ENCODE measurements at regions of chr9 and their contacts with region 1.

Region 1: DNA sequence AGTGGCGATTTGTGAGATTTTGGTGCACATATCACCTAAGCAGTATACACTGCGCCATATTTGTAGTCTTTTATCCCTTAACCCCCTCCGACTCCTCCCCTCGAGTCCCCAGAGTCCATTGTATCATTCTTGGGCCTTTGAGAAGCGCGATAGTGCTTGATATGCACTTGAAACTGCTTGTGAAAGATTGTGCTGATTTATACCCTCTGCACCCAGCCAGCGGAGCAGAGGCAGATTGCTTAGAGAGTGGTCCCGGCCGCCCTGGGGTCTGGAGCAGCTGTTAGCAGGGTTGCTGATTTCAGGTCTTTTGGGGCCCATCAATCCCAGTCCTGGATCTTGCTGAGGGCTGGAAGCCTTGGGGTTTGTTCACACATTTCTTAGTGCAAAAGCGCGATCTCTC is 13.0 kb upstream of the FAM240B start:
- DNase-seq: no peak
- ATAC-seq: no peak
- H3K4me3 Mint-ChIP-seq: no peak overlapping the region
- H3K27ac Mint-ChIP-seq: no peak overlapping the region
- H3K4me1 Mint-ChIP-seq: no peaks in the 10 kb centered on the region
- H3K27me3 Mint-ChIP-seq: peaks cover 2% of the 10 kb centered on the region
- CTCF ChIP-seq: no peak

Region 2: DNA sequence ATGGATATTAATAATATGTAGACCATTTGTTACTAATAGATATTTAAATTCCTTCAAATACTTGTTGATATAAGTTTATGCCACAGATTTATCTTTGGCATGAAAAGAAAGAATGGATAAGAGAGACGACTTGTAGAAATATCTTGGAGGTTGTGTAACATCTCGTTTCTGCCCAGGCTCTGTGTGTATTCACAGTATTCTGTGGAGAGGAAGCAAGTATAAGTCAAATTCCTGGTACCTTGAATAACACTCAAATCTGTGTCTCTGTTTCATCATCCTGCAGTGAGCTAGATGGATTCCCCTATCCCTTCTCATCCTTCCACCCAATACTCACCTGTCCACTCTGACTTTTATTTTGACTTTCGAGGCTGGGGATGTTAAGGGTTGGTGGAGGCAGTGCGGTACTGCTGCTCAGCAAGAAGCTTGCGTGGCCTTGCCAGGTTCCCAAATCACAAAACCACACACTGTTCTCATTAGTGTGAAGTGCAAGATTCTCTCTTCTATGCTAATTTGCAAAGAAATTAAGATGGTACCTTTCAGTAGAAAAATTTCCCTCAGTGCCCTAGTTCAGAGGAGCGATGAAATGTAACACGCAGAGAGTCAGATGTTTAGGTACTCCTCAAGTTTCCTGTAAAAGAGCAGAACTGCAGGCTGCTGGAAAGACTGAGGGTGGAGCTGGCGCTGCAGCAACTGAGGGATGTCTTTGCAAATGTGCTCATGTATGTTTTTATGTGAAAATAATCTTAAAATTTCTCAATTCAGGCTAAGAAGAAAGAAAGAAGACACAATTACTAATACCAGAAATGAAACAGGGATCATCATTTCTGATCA is 69.9 kb before region 1 on chr9:
- CTCF ChIA-PET with region 1: no interaction called
- POLR2A ChIA-PET with region 1: no interaction called
- intact Hi-C with region 1: loop called (anchors 10 kb)
- DNase-seq: no peak
- ATAC-seq: no peak
- H3K4me3 Mint-ChIP-seq: no peak overlapping the region
- H3K27ac Mint-ChIP-seq: no peak overlapping the region
- H3K4me1 Mint-ChIP-seq: no peaks in the 10 kb centered on the region
- H3K27me3 Mint-ChIP-seq: peaks cover 14% of the 10 kb centered on the region
- CTCF ChIP-seq: no peak

Region 3: DNA sequence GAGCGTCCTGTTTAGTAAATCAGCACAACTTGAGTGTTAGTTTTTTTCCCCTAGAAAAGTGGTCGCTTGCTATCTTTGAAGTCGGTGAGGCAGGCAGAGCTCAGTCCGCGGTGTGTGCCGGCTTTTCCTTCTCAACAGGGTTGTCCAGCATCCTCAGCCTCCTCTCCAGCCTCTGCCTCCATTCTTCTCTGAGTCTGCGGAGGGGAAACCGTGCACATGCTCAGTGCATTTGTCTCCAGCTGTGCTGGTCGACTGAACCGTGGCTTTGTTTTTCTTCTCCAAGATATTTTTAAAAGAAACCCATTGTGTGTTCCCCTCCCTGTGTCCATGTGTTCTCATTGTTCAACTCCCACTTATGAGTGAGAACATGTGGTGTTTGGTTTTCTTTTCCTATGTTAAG is 38.2 kb before region 1 on chr9:
- CTCF ChIA-PET with region 1: no interaction called
- POLR2A ChIA-PET with region 1: no interaction called
- intact Hi-C with region 1: loop called (anchors 5 kb)
- DNase-seq: no peak
- ATAC-seq: no peak
- H3K4me3 Mint-ChIP-seq: no peak overlapping the region
- H3K27ac Mint-ChIP-seq: no peak overlapping the region
- H3K4me1 Mint-ChIP-seq: no peaks in the 10 kb centered on the region
- H3K27me3 Mint-ChIP-seq: peaks cover 1% of the 10 kb centered on the region
- CTCF ChIP-seq: no peak

Region 4: GRCh38 chr9:38747067-38747466 is 14.2 kb after region 1 on chr9:
- CTCF ChIA-PET with region 1: no interaction called
- POLR2A ChIA-PET with region 1: no interaction called
- intact Hi-C with region 1: no loop called
- DNase-seq: no peak
- ATAC-seq: no peak
- H3K4me3 Mint-ChIP-seq: no peak overlapping the region
- H3K27ac Mint-ChIP-seq: no peak overlapping the region
- H3K4me1 Mint-ChIP-seq: no peaks in the 10 kb centered on the region
- H3K27me3 Mint-ChIP-seq: peaks cover 5% of the 10 kb centered on the region
- CTCF ChIP-seq: no peak

Measured in activated CD8-positive, alpha-beta T cell treated with anti-CD3 and anti-CD28 coated beads for 36 hours (primary cell).